ENCODE measurements at regions of chr9 and their contacts with region 1.

Region 1: GRCh38 chr9:75027187-75028107 is 646 bp downstream of the CARNMT1 start:
- DNase-seq: peak; percentile 59
- H3K4me3 ChIP-seq: peak overlapping the region; percentile 93
- H3K27ac ChIP-seq: peak overlapping the region; percentile 97
- H3K4me1 ChIP-seq: peaks cover 24% of the 10 kb centered on the region
- H3K27me3 ChIP-seq: no peaks in the 10 kb centered on the region
- CTCF ChIP-seq: no peak

Region 2: GRCh38 chr9:75071530-75072124 is 44.2 kb after region 1 on chr9:
- intact Hi-C with region 1: loop called (anchors 10 kb)
- DNase-seq: no peak
- H3K4me3 ChIP-seq: no peak overlapping the region
- H3K27ac ChIP-seq: no peak overlapping the region
- H3K4me1 ChIP-seq: no peaks in the 10 kb centered on the region
- H3K27me3 ChIP-seq: no peaks in the 10 kb centered on the region
- CTCF ChIP-seq: no peak

Region 3: GRCh38 chr9:75101096-75101495 is 73.6 kb after region 1 on chr9:
- intact Hi-C with region 1: no loop called
- DNase-seq: no peak
- H3K4me3 ChIP-seq: no peak overlapping the region
- H3K27ac ChIP-seq: peak overlapping the region; percentile 4
- H3K4me1 ChIP-seq: peaks cover 64% of the 10 kb centered on the region
- H3K27me3 ChIP-seq: no peaks in the 10 kb centered on the region
- CTCF ChIP-seq: no peak

Measured in left ventricle myocardium inferior (tissue), 1 donor.